Sigmoid colon (tissue), 7 donors: ENCODE measurements at regions of chr1 and their contacts with region 1.

Region 1: DNA sequence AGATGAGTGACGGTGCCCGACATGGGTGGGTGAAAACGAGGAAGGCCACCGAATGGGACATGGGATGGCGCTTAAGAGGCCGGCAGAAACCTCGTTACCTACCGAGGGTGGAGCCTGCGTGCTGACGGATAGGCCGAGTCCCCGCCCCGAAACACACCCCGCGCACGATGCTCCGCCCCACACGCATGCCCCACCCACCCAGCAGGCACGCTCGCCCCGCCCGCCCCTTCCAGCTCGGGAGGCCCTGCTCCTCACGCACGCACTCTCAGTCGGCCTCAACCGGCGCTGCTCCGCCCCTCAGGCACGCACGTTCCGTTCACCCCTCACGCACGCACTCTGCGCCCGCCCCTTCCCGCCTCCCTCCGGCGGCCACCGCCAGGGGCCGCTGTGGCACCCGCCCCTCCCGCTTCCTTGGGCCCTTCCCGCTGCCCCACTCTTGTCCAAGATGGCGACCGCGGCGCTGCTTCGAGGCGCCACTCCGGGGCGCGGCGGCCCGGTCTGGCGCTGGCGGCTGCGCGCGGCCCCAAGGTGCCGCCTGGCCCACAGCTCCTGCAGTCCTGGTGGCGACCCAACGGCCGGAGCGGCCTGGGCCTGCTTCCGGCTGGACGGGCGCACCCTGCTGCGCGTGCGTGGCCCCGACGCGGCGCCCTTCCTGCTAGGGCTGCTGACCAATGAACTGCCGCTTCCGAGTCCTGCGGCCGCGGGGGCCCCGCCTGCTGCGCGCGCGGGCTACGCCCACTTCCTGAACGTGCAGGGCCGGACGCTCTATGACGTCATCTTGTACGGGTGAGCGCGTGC is at the start of gene IBA57:
- DNase-seq: peak; percentile 100
- H3K4me3 ChIP-seq: peak within 1 kb of the TSS; percentile 69 to 83 (median 78)
- H3K27ac ChIP-seq: peak within 1 kb of the TSS; percentile 94 to 100 (median 98)
- H3K4me1 ChIP-seq: peaks cover 0 to 30% (median 24%) of the 10 kb centered on the region in 4 donors
- H3K27me3 ChIP-seq: peaks cover 3 to 23% (median 10%) of the 10 kb centered on the region in 3 donors
- CTCF ChIP-seq: peak; percentile 64 to 92 (median 80)
- EP300 ChIP-seq: peak in 2 of 4 donors; percentile 84 to 99
- POLR2A ChIP-seq: no peak
- total RNA-seq, gene IBA57: 2.9 to 14.0 (median 7.3) TPM

Region 2: DNA sequence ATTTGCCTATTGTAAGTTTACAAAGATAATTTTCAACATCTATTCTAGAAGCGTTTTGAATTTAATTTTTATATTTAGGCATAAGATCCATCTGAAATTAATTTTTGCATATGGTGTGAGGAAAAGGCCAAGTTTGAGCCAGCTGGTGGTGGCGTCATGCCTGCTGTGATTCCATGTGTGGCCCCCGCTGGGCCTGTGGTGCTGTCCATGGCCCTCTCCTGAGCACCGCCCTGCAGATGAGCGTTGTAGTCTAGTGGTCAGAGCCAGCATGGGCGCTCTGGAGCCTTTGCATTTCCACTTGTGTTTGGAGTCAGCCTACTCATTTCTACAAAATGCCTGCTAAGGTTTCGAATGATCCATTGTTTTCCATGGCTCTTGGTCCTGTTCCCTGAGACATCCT is 327.4 kb before region 1 on chr1:
- intact Hi-C with region 1: no loop called
- DNase-seq: no peak
- H3K4me3 ChIP-seq: no peak overlapping the region
- H3K27ac ChIP-seq: no peak overlapping the region
- H3K4me1 ChIP-seq: no peaks in the 10 kb centered on the region
- H3K27me3 ChIP-seq: no peaks in the 10 kb centered on the region
- CTCF ChIP-seq: no peak
- EP300 ChIP-seq: no peak
- POLR2A ChIP-seq: no peak

Region 3: DNA sequence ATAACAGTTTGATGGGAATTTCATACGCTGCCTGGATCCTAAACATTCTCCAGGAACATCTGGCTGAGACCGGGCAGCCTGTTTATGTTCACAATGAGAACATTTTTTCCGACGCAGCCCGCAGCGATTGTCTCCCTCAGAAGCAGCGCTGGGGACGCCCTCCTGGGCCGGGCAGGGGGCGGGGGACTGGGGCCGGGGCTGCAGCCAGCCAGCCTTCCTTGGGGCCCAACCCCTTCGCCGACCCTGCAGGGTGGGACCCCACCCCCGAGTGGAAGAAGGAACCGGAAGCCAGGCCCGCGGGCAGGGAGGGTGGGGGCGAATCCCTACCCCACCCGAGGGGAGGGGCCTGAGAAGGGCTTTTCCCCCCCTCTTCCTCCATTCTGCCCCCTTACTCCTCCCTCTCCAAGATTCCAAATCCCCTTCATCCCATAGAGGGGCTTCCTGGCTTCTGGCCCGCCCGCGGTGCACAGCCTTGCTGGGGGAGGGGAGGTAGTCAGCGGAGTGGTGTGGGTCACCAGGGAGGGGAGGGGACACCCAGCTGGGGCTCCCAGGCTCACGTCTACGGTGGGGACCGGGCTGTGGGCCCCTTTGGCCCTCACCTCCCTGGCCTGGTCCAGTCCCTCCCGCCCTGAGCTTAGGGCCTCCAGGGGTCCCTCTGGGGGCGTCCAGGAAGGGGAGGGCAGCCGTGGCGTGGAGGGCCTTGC is 278.4 kb before region 1 on chr1:
- intact Hi-C with region 1: loop called (anchors 10 kb)
- DNase-seq: peak; percentile 92
- H3K4me3 ChIP-seq: peak overlapping the region; percentile 52 to 72 (median 62)
- H3K27ac ChIP-seq: peak overlapping the region; percentile 91 to 99 (median 96)
- H3K4me1 ChIP-seq: peaks cover 0 to 33% (median 22%) of the 10 kb centered on the region in 4 donors
- H3K27me3 ChIP-seq: no peaks in the 10 kb centered on the region
- CTCF ChIP-seq: no peak
- EP300 ChIP-seq: peak in 2 of 4 donors; percentile 69 to 70
- POLR2A ChIP-seq: peak in 1 of 2 donors; percentile 13

Region 4: GRCh38 chr1:228102791-228103620 is 62.6 kb before region 1 on chr1 and contains the start of gene C1orf35:
- intact Hi-C with region 1: loop called (anchors 2 kb)
- DNase-seq: peak; percentile 97
- H3K4me3 ChIP-seq: peak within 1 kb of the TSS; percentile 70 to 92 (median 78)
- H3K27ac ChIP-seq: peak within 1 kb of the TSS; percentile 88 to 98 (median 95)
- H3K4me1 ChIP-seq: peaks cover 0 to 45% (median 32%) of the 10 kb centered on the region in 4 donors
- H3K27me3 ChIP-seq: no peaks in the 10 kb centered on the region
- CTCF ChIP-seq: no peak
- EP300 ChIP-seq: peak in 1 of 4 donors; percentile 63
- POLR2A ChIP-seq: peak; percentile 48 to 55
- total RNA-seq, gene C1orf35: 7.8 to 18.1 (median 13.0) TPM

Region 5: DNA sequence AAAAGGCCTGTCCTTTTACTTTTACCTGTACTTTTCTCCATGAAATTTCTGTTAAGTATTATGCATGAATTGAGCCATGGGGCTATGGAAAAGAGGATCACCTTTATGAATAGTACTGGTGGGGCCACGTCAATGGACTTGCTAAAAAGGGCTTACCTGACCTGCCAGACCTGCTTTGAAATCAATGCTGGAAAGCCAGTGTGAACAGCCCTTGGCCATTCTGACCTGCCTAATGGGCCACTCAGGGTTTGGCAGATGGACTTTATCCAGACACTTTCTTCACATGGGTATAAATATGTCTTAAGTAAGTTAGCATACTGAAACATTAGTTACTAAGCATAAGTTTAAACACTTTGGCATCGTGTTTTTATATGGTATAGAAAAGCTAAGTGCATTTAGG is 33.8 kb before region 1 on chr1:
- intact Hi-C with region 1: loop called (anchors 5 kb)
- DNase-seq: no peak
- H3K4me3 ChIP-seq: no peak overlapping the region
- H3K27ac ChIP-seq: no peak overlapping the region
- H3K4me1 ChIP-seq: peaks cover 0 to 8% (median 3%) of the 10 kb centered on the region in 4 donors
- H3K27me3 ChIP-seq: peaks cover 0 to 26% (median 0%) of the 10 kb centered on the region in 3 donors
- CTCF ChIP-seq: no peak
- EP300 ChIP-seq: no peak
- POLR2A ChIP-seq: no peak

Region 6: DNA sequence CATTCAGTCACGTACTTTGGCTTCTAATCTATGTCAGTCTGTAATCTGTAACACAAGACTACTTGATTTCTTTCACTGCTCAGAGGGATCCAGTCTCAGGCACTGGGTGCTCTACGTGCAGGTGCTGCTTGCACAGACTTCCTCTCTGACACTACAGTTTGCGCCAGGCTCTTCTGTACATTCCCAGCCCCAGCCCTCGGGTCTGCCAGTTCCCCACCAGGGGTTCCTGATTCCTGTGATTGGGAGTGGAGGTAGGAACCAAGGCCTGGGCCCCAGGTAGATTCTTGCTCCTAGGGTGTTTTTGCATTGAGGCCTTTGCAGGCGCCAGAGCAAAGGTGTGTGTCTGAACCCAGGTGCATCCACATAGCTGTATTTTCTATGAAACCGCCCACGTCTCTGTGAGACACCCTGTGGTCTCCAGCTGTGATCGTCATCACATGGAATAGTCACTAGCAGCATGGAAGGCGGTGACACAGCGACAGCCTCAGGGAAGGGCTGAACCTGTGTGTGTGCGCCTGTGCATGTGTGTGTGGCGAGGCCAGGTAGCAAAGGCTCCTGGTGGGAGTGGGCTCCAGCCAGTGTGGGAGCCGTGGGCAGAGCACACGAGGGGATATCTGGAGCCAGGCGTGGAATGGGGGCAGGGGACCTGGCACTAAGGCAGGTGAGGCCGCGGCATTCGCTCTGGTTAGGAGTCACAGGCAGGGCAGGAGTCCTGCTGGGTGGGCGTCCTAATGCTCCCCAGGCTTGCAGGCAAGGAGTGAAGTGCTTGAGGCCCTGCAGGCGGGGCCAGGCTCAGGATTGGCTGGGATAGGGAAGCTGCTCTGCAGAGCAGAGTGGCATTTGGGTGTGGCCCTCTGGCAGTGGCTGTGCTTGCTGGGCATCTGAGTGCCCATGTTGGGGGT is 10.7 kb before region 1 on chr1:
- intact Hi-C with region 1: loop called (anchors 1 kb)
- DNase-seq: peak; percentile 56
- H3K4me3 ChIP-seq: no peak overlapping the region
- H3K27ac ChIP-seq: no peak overlapping the region
- H3K4me1 ChIP-seq: peaks cover 0 to 32% (median 26%) of the 10 kb centered on the region in 4 donors
- H3K27me3 ChIP-seq: peaks cover 0 to 4% (median 0%) of the 10 kb centered on the region in 3 donors
- CTCF ChIP-seq: no peak
- EP300 ChIP-seq: no peak
- POLR2A ChIP-seq: no peak